Common myeloid progenitor, CD34-positive (primary cell): ENCODE measurements at regions of chr7 and their contacts with region 1.

Region 1: GRCh38 chr7:37820708-37821468 is 27.5 kb upstream of the NME8 start:
- DNase-seq: no peak
- H3K4me3 ChIP-seq: no peak overlapping the region
- H3K27ac ChIP-seq: no peak overlapping the region
- H3K4me1 ChIP-seq: peaks cover 0 to 6% (median 0%) of the 10 kb centered on the region in 4 experiments
- H3K27me3 ChIP-seq: no peaks in the 10 kb centered on the region

Region 2: GRCh38 chr7:37833107-37833817 is 12.4 kb after region 1 on chr7:
- CTCF ChIA-PET with region 1: interaction called, 16 read pairs
- POLR2A ChIA-PET with region 1: no interaction called
- DNase-seq: peak; percentile 80 to 91 (median 89)
- H3K4me3 ChIP-seq: peak overlapping the region; percentile 38 to 87 (median 66)
- H3K27ac ChIP-seq: no peak overlapping the region
- H3K4me1 ChIP-seq: peaks cover 5 to 15% (median 7%) of the 10 kb centered on the region in 4 experiments
- H3K27me3 ChIP-seq: no peaks in the 10 kb centered on the region

Region 3: DNA sequence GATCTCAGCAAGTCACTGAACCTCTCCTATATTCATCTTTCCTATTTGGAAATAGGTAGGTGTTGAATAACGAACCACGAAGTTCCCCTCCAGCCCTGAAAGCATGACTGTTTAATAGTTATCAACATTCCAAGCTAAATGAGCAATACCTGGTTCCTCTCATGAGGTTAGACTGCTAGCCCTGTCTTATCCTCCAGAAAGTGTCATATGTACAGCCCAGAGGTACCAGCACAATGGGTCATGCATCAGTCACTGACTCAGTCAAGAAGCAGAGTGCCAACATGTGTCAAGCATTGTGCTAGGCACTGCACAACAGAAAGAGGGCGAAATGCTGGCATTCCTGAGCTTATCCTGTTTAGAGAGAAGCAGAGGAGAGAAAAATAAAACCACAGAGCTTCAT is 740.3 kb after region 1 on chr7:
- CTCF ChIA-PET with region 1: no interaction called
- POLR2A ChIA-PET with region 1: no interaction called
- DNase-seq: no peak
- H3K4me3 ChIP-seq: no peak overlapping the region
- H3K27ac ChIP-seq: no peak overlapping the region
- H3K4me1 ChIP-seq: no peaks in the 10 kb centered on the region
- H3K27me3 ChIP-seq: peaks cover 0 to 3% (median 0%) of the 10 kb centered on the region in 5 experiments